Stomach (tissue), 19 donors: ENCODE measurements at regions of chr19 and their contacts with region 1.

Region 1: DNA sequence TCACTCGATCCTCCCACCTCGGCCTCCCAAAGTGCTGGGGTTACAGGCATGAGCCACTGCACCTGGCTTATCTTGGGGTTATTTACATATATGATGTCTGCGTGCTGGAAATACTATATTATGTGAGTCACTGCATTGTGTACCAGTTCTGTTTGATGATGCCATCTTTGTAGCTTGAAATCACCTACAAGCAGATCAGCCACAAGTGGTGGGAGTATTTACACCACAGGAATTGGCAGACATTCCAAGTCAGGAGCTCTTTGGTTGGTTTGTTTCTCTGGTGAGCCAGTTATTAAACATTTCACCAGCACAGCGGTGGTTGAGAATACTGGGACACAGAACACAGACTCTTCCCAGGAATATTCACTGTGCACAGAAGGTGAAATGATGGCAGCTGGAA is 4.5 kb upstream of the TIMM44 start:
- DNase-seq: no peak
- H3K4me3 ChIP-seq: no peak overlapping the region
- H3K27ac ChIP-seq: no peak overlapping the region
- H3K4me1 ChIP-seq: peaks cover under 1 to 13% (median 3%) of the 10 kb centered on the region in 4 donors
- H3K27me3 ChIP-seq: no peaks in the 10 kb centered on the region
- CTCF ChIP-seq: no peak
- EP300 ChIP-seq: no peak
- POLR2A ChIP-seq: no peak

Region 2: GRCh38 chr19:7718668-7719067 is 229.3 kb before region 1 on chr19:
- intact Hi-C with region 1: no loop called
- DNase-seq: no peak
- H3K4me3 ChIP-seq: no peak overlapping the region
- H3K27ac ChIP-seq: no peak overlapping the region
- H3K4me1 ChIP-seq: no peaks in the 10 kb centered on the region
- H3K27me3 ChIP-seq: peaks cover 0 to 37% (median 0%) of the 10 kb centered on the region in 3 donors
- CTCF ChIP-seq: no peak
- EP300 ChIP-seq: no peak
- POLR2A ChIP-seq: no peak

Region 3: DNA sequence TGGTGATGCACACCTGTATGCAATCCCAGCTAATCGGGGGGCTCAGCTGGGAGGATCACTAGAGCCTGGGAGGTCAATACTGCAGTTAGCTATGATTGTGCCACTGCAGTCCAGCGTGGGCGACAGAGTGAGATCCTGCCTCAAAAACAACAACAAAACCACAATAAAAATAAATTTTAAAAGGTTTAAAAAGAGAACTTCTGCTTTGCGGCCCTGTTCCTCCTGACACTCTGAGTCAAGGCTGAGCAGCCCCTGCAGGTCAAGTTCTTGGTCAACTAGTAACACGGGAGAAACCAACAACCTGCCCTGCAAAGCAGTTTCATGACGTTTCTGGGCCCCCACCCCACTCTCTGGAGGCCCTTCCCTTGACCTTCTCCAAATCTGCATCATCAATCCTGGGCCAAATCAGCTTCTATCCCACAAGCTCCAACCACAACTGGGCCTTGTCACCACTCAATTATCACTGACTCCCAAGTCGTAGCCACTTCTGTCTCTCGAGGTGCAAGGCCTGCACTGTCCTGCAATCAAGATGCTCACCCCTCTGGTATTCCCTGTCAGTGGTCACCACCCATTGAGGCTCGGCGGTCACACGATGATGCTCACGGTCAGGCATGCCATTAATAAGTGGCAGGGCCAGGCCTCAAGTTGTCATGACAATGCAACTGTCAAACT is 50.0 kb after region 1 on chr19:
- intact Hi-C with region 1: loop called (anchors 5 kb)
- DNase-seq: no peak
- H3K4me3 ChIP-seq: no peak overlapping the region
- H3K27ac ChIP-seq: no peak overlapping the region
- H3K4me1 ChIP-seq: peaks cover 34 to 84% (median 57%) of the 10 kb centered on the region in 4 donors
- H3K27me3 ChIP-seq: no peaks in the 10 kb centered on the region
- CTCF ChIP-seq: no peak
- EP300 ChIP-seq: no peak
- POLR2A ChIP-seq: no peak

Region 4: GRCh38 chr19:8252922-8253589 is 305.1 kb after region 1 on chr19:
- intact Hi-C with region 1: no loop called
- DNase-seq: peak; percentile 87 to 94
- H3K4me3 ChIP-seq: no peak overlapping the region
- H3K27ac ChIP-seq: no peak overlapping the region
- H3K4me1 ChIP-seq: peaks cover 7 to 24% (median 19%) of the 10 kb centered on the region in 4 donors
- H3K27me3 ChIP-seq: no peaks in the 10 kb centered on the region
- CTCF ChIP-seq: peak in 5 of 7 experiments; percentile 88 to 97 (median 95)
- EP300 ChIP-seq: no peak
- POLR2A ChIP-seq: no peak